CD4-positive, alpha-beta T cell (primary cell): ENCODE measurements at regions of chr14 and their contacts with region 1.

Region 1: GRCh38 chr14:50407111-50407812 is 10.6 kb upstream of the CDKL1 start:
- DNase-seq: no peak
- ATAC-seq: no peak
- H3K4me3 ChIP-seq: no peak overlapping the region
- H3K4me3 Mint-ChIP-seq: no peak overlapping the region
- H3K27ac ChIP-seq: no peak overlapping the region
- H3K27ac Mint-ChIP-seq: no peak overlapping the region
- H3K4me1 ChIP-seq: peaks cover 5% of the 10 kb centered on the region
- H3K4me1 Mint-ChIP-seq: no peaks in the 10 kb centered on the region
- H3K27me3 ChIP-seq: no peaks in the 10 kb centered on the region
- H3K27me3 Mint-ChIP-seq: no peaks in the 10 kb centered on the region
- CTCF ChIP-seq: no peak

Region 2: DNA sequence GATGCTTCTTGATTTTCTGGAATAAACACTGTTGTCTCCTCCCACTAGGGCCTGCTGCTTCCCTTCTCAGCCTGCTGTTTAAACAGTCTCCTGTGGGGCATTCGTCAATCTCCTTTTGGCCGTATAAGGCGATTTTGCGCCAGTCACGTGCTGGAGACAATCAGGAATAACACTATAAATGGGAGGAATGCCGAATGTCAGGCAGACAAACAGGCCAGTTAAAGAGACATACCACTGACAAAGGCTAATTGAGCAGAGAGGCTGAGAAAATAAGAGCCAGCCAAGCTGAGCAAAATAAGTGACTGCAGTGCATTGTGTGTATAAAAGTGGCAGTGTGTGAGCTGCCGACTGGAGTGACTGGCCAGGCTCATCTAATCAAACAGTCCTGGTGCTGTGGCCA is 71.9 kb before region 1 on chr14:
- CTCF ChIA-PET with region 1: no interaction called
- POLR2A ChIA-PET with region 1: no interaction called
- intact Hi-C with region 1: loop called in 1 of 2 experiments (anchors 5 kb)
- DNase-seq: no peak
- ATAC-seq: no peak
- H3K4me3 ChIP-seq: no peak overlapping the region
- H3K4me3 Mint-ChIP-seq: no peak overlapping the region
- H3K27ac ChIP-seq: no peak overlapping the region
- H3K27ac Mint-ChIP-seq: peak overlapping the region; percentile 50
- H3K4me1 ChIP-seq: peaks cover 11% of the 10 kb centered on the region
- H3K4me1 Mint-ChIP-seq: peaks cover 20% of the 10 kb centered on the region
- H3K27me3 ChIP-seq: no peaks in the 10 kb centered on the region
- H3K27me3 Mint-ChIP-seq: no peaks in the 10 kb centered on the region
- CTCF ChIP-seq: no peak

Region 3: DNA sequence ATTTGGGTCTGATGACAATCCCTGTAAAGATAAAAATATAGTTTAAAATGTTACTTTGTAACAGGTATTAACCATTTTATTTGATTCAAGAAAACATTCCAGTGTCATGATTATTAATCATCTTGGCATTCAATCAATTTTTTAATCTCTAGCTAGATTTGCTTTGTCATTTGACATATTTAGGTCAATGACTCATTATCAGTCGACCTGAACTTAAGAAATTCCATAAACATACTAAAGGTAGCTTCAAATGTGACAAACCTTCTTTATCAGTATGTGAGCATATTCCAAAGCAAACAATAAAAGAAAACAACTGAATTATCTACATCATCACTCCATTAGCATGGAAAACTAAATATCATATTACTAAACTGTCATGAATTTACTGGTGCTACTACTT is 40.2 kb after region 1 on chr14:
- CTCF ChIA-PET with region 1: no interaction called
- POLR2A ChIA-PET with region 1: no interaction called
- intact Hi-C with region 1: no loop called
- DNase-seq: no peak
- ATAC-seq: no peak
- H3K4me3 ChIP-seq: no peak overlapping the region
- H3K4me3 Mint-ChIP-seq: no peak overlapping the region
- H3K27ac ChIP-seq: no peak overlapping the region
- H3K27ac Mint-ChIP-seq: no peak overlapping the region
- H3K4me1 ChIP-seq: no peaks in the 10 kb centered on the region
- H3K4me1 Mint-ChIP-seq: no peaks in the 10 kb centered on the region
- H3K27me3 ChIP-seq: no peaks in the 10 kb centered on the region
- H3K27me3 Mint-ChIP-seq: no peaks in the 10 kb centered on the region
- CTCF ChIP-seq: no peak